Calu3 (cell line): ENCODE measurements at regions of chr6 and their contacts with region 1.

Region 1: GRCh38 chr6:70686548-70687133 is 19.0 kb downstream of the SMAP1 start:
- DNase-seq: no peak
- H3K4me3 Mint-ChIP-seq: no peak overlapping the region
- H3K27ac Mint-ChIP-seq: no peak overlapping the region
- H3K4me1 Mint-ChIP-seq: peaks cover 23% of the 10 kb centered on the region
- H3K27me3 Mint-ChIP-seq: no peaks in the 10 kb centered on the region
- CTCF ChIP-seq: peak; percentile 65

Region 2: DNA sequence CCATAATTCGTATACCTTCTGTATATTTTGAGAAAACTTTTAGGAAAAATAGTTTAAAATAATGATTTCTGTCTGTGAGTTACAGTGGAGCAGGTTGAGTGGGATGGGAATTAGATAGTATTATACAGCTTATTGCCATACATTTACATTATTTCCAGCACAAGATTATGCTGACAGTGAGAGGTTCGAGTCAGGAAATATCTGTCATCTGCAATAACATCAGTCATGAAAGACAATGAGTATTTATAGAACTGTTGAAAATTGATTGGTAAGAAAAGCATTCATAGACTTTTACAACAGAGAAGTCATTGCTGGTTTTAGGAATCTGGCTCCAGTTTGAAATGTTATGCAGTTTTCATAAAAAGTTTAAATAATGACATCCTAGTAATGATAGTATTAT is 227.4 kb before region 1 on chr6:
- CTCF ChIA-PET with region 1: no interaction called
- intact Hi-C with region 1: no loop called
- DNase-seq: no peak
- H3K4me3 Mint-ChIP-seq: no peak overlapping the region
- H3K27ac Mint-ChIP-seq: peak overlapping the region; percentile 47
- H3K4me1 Mint-ChIP-seq: peaks cover 39% of the 10 kb centered on the region
- H3K27me3 Mint-ChIP-seq: no peaks in the 10 kb centered on the region
- CTCF ChIP-seq: no peak

Region 3: DNA sequence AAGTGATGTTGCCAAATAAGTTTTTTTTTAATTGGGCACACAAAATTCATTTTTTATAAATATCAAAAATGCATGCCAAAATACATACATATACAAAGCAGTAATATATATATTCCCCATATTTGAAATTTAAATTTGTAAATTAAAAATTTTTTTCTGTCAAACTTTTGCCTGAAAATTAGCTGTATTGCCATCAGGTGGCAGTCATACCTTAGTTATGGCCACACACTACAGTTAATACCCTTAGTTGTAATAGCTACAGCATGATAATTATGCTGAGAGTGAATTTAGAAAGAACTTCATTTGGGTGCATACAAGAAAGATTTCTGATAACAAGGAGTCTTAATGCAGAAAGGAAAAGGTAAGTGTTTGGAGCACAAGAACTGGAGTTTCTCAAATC is 166.1 kb before region 1 on chr6:
- CTCF ChIA-PET with region 1: interaction called, 11 read pairs
- intact Hi-C with region 1: loop called (anchors 1 kb)
- DNase-seq: no peak
- H3K4me3 Mint-ChIP-seq: no peak overlapping the region
- H3K27ac Mint-ChIP-seq: peak overlapping the region; percentile 35
- H3K4me1 Mint-ChIP-seq: peaks cover 16% of the 10 kb centered on the region
- H3K27me3 Mint-ChIP-seq: no peaks in the 10 kb centered on the region
- CTCF ChIP-seq: no peak

Region 4: DNA sequence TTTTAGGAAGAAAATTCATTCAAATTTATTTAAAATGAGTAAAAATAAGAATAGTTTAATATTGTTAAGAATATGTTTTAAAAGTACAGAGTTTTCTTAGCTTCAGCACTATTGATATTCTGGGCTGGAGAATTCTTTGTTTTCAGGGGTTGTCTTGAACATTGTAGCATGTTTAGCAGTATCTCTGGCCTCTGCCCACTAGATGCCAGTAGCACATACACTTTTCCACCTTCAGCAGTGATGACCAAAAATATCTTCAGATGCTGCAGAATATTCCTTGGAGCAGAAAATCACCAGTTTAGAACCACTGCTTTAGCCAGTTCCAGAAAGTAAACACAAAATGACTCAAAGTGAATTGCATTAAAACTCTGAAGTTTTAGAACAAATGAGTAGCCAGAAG is 139.3 kb before region 1 on chr6:
- CTCF ChIA-PET with region 1: interaction called, 3 read pairs
- intact Hi-C with region 1: loop called (anchors 1 kb)
- DNase-seq: no peak
- H3K4me3 Mint-ChIP-seq: no peak overlapping the region
- H3K27ac Mint-ChIP-seq: no peak overlapping the region
- H3K4me1 Mint-ChIP-seq: no peaks in the 10 kb centered on the region
- H3K27me3 Mint-ChIP-seq: no peaks in the 10 kb centered on the region
- CTCF ChIP-seq: no peak

Region 5: DNA sequence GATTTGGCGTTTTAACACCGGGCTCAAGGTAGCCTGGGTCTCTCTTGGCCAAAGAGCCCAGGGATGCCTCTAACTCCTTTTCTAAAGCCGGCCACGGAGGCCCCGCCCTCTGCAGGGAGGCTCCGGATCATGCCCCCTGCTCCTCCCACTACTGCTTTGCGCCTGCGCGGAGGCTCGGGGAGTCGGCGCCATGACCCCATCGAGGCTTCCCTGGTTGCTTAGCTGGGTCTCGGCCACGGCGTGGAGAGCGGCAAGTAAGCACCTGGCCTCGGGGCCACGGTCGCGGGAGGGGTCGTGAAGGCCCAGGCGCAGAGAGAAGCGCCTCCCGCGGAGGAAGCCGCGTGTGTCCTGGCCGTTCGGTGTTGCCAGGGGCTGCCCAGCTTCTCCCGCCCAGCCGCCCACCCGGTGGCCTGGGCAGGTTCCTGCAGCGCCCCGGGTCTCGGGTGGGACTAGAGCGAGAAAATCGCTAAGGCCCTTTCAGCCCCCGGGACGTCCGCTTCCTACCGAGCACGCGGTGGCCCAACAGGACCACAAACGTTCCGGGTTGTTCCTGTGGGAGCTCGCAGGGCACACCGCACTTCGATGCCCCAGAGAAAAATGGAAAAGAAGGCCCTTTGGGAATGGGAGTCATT is 119.8 kb before region 1 on chr6 and contains the start of gene SDHAF4:
- CTCF ChIA-PET with region 1: interaction called, 7 read pairs
- intact Hi-C with region 1: loop called (anchors 2 kb)
- DNase-seq: peak; percentile 97
- H3K4me3 Mint-ChIP-seq: peak within 1 kb of the TSS; percentile 72
- H3K27ac Mint-ChIP-seq: peak within 1 kb of the TSS; percentile 39
- H3K4me1 Mint-ChIP-seq: peaks cover 7% of the 10 kb centered on the region
- H3K27me3 Mint-ChIP-seq: no peaks in the 10 kb centered on the region
- CTCF ChIP-seq: no peak
- total RNA-seq, gene SDHAF4: 13.3 and 21.0 TPM in 2 replicates

Region 6: DNA sequence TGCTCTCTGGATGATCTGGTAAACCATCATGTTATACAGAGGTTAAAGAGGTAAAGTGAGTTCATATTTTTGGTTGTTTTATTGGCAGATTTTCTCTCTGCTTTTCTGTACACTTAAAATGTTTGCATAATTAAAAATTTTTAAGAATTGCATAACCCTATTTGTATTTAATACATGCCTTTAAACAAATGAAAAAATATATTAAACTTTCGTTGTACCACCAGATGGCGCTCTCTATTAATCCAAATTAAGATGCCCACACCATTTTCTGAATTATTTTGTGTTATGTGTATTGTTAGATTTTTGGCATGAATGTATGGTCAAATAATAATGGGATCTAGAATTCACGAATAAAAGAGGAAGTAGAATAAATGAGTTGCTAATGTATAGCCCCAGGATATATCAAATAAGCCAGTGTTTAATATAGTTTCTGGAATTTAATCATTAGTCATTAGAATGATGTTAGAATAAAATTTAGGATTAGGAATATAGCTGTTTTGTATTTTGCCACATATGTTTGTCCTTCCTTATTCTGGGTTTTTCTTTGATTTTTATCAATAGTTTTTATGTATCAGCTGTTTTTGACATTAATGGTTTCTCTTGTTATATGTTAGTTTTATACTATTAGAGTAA is 20.0 kb after region 1 on chr6:
- CTCF ChIA-PET with region 1: no interaction called
- intact Hi-C with region 1: no loop called
- DNase-seq: peak; percentile 28
- H3K4me3 Mint-ChIP-seq: no peak overlapping the region
- H3K27ac Mint-ChIP-seq: no peak overlapping the region
- H3K4me1 Mint-ChIP-seq: peaks cover 26% of the 10 kb centered on the region
- H3K27me3 Mint-ChIP-seq: no peaks in the 10 kb centered on the region
- CTCF ChIP-seq: peak; percentile 49

Region 7: DNA sequence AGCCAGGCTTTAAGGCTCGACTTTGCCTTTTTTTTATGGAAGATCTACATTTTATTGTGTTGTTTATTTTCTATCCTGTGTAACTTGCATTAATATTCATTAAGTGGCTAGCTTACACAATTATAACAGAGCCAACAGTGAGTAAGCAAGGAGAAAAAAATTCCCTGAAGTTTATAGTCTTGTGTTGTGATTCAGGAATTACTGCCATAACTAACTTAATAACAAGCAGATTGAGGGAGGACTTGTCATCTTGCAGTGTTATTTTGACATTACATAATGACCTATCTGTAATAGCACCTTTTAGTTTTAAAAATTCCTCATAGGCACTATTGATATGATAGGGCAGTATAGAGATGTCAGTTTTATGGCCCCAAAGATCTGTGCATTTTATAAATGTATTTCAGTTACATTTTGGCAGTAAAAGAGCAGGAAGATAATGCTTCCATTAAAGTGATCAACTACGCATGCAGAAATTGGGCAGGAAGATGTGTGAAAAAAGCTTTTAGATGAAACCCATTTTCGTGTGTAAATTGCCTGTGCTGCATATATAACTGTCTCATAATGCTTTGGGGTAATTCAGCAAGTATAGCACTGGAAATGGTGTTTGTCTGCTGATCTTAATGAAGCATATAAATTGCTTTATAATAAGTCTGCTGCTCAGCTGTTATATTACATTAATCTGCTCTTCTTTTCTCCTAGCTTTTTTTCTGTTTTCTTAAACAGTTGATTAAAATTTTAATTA is 104.0 kb after region 1 on chr6:
- CTCF ChIA-PET with region 1: no interaction called
- intact Hi-C with region 1: no loop called
- DNase-seq: no peak
- H3K4me3 Mint-ChIP-seq: no peak overlapping the region
- H3K27ac Mint-ChIP-seq: no peak overlapping the region
- H3K4me1 Mint-ChIP-seq: no peaks in the 10 kb centered on the region
- H3K27me3 Mint-ChIP-seq: no peaks in the 10 kb centered on the region
- CTCF ChIP-seq: no peak